Activated T-helper 1 cell treated with anti-CD3 and anti-CD28 coated beads, Interleukin-12 subunit alpha, Interleukin-12 subunit beta, Interleukin-2, Interleukin-4 antibody, amounts not matched to agents 30 ng/mL and 10 ng/mL and 1 ng/mL, durations not matched to agents 14 hours and 24 hours and 36 hours (primary cell): ENCODE measurements at regions of chr3 and their contacts with region 1.

Region 1: DNA sequence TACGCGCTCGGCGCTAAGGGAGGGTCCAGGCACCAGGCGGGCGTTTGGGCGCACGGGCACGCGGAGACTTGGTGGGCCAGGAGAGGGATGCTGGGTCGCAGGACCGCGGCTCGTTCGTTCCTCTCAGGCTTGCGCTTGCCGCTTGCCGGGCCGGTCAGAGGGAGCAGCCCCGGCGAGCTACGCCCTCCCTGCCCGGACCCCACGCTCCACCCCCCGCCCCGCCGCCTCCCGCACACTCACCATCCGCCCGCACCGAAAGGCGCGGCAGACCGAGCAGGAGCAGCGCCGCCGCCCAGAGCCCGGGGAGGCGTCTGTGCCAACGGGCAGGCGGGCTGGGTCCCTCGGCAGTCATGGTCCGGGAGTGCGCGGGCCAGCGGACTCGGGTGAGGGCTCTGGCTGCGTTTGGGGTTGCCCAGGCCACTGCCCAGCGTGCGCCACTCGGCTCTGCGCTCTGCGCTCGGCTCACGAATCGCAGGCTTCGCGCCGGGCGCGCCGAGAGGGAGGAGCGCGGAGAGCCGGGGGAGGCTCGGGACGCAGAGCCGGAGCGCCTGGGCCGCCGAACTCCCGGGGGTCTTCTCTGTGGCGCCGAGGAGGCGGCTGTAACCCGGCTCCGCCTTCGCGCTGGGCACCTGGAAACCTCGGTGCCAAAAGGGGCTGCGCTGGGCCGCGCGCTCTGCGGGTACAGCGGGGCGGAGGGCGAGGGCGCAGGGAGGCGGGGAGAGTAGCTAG is at the start of gene SUSD5:
- DNase-seq: no peak
- H3K4me3 Mint-ChIP-seq: no peak within 1 kb of the TSS
- H3K27ac Mint-ChIP-seq: no peak within 1 kb of the TSS
- H3K4me1 Mint-ChIP-seq: peaks cover 8% of the 10 kb centered on the region
- H3K27me3 Mint-ChIP-seq: peaks cover 47% of the 10 kb centered on the region
- total RNA-seq, gene SUSD5: not detected in 2 replicates

Region 2: DNA sequence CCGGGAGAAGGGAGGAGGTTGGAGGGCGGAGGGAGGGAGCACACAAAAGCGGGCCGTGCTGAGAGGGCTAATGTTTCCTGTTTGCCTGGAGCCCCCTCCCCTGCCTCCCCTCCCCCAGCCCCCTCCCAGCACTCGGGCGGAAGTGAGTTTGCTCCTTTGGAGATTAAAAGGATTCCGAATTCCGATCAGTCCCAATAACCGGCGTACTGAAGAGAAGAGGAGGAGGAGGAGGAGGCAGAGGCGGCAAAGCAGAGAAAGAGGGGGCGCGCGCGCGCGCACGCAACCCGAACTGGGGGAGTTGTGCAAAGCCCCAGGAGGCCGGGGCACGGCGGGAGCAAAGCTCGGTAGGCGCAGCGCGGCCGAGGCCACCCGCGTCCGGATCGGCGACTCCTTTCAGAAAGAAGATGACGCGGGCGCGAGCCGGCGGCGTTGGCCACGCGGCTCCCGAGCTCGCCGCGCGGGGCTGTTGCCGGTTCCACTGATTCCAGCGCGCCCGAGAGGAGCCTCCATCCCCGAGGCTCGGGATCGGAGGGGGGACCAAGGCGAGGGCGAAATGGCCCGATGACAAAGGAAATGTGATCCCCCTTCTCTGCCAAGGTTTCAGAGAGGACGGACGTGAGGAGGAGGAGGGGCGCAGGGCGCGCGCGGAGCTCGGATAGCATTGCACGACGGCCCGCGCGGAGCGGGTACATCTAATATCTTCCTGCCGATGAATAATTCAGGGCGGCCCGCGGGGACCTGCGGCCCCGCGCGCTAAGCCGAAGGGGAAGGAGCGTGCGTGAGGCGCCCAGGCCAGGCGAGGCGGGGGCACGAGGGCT is 402.0 kb before region 1 on chr3:
- intact Hi-C with region 1: loop called (anchors 2 kb)
- DNase-seq: no peak
- H3K4me3 Mint-ChIP-seq: peak overlapping the region; percentile 72
- H3K27ac Mint-ChIP-seq: peak overlapping the region; percentile 61
- H3K4me1 Mint-ChIP-seq: peaks cover 13% of the 10 kb centered on the region
- H3K27me3 Mint-ChIP-seq: peaks cover 58% of the 10 kb centered on the region

Region 3: DNA sequence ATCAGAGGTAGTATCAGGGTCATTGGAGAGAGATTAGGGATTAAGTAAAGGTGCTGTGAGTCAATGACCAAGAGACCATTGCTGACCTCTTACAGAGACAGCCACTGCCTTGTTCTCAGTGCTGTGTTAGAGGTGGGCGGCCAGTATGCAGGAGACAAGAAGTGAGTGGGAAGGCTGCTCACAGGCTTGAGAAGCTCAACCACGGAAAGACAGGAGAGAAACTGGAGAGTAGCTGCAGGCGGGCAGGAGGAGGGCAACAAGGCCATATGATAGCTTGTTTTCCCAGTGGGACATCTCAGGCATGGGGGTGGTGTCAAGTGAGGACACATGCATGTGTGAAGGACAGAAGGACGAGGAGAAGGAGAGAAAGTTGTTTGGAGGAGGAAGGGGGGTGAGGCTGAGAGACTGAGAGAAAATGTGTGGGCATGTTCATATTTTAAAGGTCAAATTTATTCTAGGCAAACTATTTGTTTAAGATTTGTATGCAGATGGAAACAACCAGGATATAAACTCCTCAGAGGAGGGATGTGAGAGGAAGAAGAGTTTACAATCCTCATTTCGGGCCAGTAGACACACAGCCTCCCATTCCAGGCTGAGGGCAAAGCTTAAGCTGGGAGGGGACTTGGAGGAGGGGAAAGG is 817.3 kb after region 1 on chr3:
- intact Hi-C with region 1: no loop called
- DNase-seq: no peak
- H3K4me3 Mint-ChIP-seq: no peak overlapping the region
- H3K27ac Mint-ChIP-seq: no peak overlapping the region
- H3K4me1 Mint-ChIP-seq: no peaks in the 10 kb centered on the region
- H3K27me3 Mint-ChIP-seq: no peaks in the 10 kb centered on the region